Activated B cell treated with CpG ODN at 0.5 μM for 24 hours (primary cell): ENCODE measurements at regions of chr2 and their contacts with region 1.

Region 1: DNA sequence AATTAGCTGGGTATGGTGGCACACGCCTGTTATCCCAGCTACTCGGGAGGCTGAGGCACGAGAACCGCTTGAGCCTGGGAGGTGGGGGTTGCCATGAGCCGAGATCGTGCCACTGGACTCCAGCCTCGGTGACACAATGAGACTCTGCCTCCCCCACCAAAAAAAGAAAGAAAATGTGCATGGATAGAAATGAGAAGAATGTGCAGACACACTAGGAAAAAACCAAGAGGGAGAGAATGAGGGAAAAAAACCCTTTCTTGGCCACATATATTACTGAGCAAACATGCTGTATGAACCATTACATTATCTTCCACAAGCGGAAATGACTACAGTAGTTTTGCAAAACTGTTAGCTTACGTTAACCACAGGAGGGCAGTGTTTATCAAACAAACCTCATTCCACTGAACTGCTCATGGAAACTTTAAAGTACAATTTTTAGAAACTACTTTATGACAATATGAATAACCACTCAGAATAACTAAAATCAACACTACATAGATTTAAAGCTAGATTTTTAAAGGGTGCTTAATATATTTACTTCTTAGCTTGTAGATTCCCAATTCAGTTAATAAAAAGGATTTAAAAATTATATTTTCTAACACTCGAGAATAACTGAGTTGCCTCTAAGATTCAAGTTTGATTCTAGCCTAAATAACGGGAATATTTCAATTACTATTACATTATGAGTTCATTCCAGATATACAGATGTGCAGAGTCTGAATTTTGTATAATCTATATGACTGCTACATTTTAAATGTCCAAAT is 26.4 kb downstream of the ASXL2 start:
- DNase-seq: no peak
- ATAC-seq: peak; percentile 91
- H3K4me3 Mint-ChIP-seq: peak overlapping the region; percentile 58
- H3K27ac Mint-ChIP-seq: peak overlapping the region; percentile 42
- H3K4me1 Mint-ChIP-seq: peaks cover 36% of the 10 kb centered on the region
- H3K27me3 Mint-ChIP-seq: no peaks in the 10 kb centered on the region
- CTCF ChIP-seq: no peak

Region 2: GRCh38 chr2:25606892-25607291 is 245.0 kb before region 1 on chr2:
- CTCF ChIA-PET with region 1: interaction called, 25 read pairs
- POLR2A ChIA-PET with region 1: interaction called, 4 read pairs
- intact Hi-C with region 1: loop called (anchors 1 kb)
- DNase-seq: no peak
- ATAC-seq: no peak
- H3K4me3 Mint-ChIP-seq: no peak overlapping the region
- H3K27ac Mint-ChIP-seq: no peak overlapping the region
- H3K4me1 Mint-ChIP-seq: peaks cover 29% of the 10 kb centered on the region
- H3K27me3 Mint-ChIP-seq: no peaks in the 10 kb centered on the region
- CTCF ChIP-seq: no peak

Region 3: DNA sequence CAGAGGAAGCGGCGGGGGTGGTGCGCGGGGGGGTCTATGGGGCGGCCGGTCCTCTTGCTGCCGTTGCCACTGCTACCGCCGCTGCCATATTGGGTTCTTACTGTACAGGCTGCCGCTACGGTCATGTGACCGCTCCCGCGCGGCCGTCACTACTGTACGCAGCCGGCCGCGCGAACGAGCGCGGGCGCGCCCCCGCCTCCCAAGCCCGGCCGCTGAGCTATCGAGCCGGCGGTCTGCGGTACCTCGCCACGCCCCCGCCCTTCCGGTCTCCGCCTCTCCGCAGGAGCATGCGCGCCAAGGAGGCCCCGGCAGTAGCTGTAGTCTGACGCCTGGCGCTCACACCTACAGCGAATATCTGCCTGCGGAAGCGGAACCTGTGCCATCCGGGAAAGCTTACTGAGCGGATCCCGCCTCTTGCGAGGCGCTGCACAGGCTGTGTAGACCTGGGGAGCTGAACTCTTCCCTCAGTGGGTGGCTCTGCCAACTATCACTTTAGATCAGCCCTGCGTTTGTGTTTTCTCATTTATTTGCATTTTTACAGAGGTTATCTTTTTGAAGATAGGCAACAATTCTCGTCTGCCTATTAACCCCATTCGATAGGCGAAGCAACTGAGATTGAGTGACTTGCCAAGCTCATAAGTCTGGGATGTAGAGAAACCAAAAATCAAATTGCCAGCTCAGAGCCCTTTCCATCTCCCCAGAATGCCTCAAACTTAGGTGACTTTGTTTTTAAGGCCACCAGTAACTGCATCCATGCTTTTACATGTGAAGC is 26.6 kb after region 1 on chr2 and contains the start of gene ASXL2:
- CTCF ChIA-PET with region 1: interaction called, 17 read pairs
- POLR2A ChIA-PET with region 1: interaction called, 14 read pairs
- intact Hi-C with region 1: loop called (anchors 1 kb)
- DNase-seq: peak; percentile 98
- ATAC-seq: peak; percentile 88
- H3K4me3 Mint-ChIP-seq: peak within 1 kb of the TSS; percentile 98
- H3K27ac Mint-ChIP-seq: peak within 1 kb of the TSS; percentile 100
- H3K4me1 Mint-ChIP-seq: peaks cover 24% of the 10 kb centered on the region
- H3K27me3 Mint-ChIP-seq: peaks cover 2% of the 10 kb centered on the region
- CTCF ChIP-seq: no peak
- total RNA-seq, gene ASXL2: 38.4 and 41.9 TPM in 2 replicates

Region 4: GRCh38 chr2:25912851-25913695 is 61.2 kb after region 1 on chr2:
- CTCF ChIA-PET with region 1: no interaction called
- POLR2A ChIA-PET with region 1: no interaction called
- intact Hi-C with region 1: no loop called
- DNase-seq: no peak
- ATAC-seq: no peak
- H3K4me3 Mint-ChIP-seq: no peak overlapping the region
- H3K27ac Mint-ChIP-seq: no peak overlapping the region
- H3K4me1 Mint-ChIP-seq: peaks cover 7% of the 10 kb centered on the region
- H3K27me3 Mint-ChIP-seq: peaks cover 4% of the 10 kb centered on the region
- CTCF ChIP-seq: no peak

Region 5: DNA sequence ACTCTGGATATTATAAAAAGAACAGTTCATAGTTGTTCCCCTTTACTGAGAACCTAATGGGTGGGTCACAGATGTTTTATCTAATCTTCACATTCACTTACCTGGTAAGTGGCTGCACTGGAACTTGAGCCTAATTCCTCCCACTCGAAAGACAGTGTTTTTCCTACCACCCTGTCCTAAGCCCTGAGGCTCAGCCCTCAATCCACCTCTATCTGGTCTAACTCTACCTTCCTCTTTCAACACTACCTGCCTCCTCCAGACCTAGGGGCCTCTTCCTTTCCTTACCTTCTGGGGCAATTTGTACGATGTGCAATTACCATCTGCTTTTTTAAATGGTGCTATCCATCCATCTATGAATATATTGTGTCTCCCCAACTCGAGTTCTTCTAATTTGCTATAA is 140.0 kb after region 1 on chr2:
- CTCF ChIA-PET with region 1: interaction called, 8 read pairs
- POLR2A ChIA-PET with region 1: no interaction called
- intact Hi-C with region 1: loop called (anchors 1 kb)
- DNase-seq: no peak
- ATAC-seq: no peak
- H3K4me3 Mint-ChIP-seq: no peak overlapping the region
- H3K27ac Mint-ChIP-seq: no peak overlapping the region
- H3K4me1 Mint-ChIP-seq: peaks cover 6% of the 10 kb centered on the region
- H3K27me3 Mint-ChIP-seq: no peaks in the 10 kb centered on the region
- CTCF ChIP-seq: no peak

Region 6: DNA sequence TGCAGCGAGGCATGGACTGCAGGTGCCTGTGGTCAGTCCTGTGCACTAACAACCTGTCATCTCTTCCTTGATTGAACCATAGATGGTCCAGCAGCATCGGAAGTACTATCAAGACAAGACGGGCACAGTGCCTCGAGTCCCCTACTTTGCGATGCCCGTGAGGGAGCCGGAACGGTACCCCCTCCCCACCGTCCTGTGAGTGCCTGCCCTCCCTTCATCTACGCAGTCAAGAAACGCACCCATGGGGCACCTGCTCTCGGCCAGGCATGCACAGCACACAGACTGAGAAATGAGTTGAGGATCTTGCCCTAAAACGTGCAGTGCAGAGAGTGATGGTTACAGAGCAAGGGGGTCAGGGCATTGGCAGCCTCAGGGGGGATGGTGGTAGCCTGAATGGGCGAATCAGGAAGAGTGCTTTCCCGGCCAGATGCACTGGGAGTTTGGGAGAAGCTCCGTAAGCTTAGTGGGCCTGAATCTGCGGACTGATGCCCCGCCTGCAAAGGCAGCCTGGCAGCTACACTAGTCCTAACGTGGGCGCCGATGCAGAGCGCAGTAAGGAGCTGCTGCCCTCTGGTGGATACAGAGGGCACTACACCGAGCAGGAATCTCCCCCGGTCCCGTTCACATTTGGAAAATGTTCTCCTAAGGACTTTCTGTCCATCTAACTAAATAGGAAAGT is 725.7 kb after region 1 on chr2:
- CTCF ChIA-PET with region 1: no interaction called
- POLR2A ChIA-PET with region 1: no interaction called
- intact Hi-C with region 1: loop called (anchors 5 kb)
- DNase-seq: peak; percentile 49
- ATAC-seq: peak; percentile 84
- H3K4me3 Mint-ChIP-seq: no peak overlapping the region
- H3K27ac Mint-ChIP-seq: no peak overlapping the region
- H3K4me1 Mint-ChIP-seq: no peaks in the 10 kb centered on the region
- H3K27me3 Mint-ChIP-seq: peaks cover 30% of the 10 kb centered on the region
- CTCF ChIP-seq: no peak

Region 7: DNA sequence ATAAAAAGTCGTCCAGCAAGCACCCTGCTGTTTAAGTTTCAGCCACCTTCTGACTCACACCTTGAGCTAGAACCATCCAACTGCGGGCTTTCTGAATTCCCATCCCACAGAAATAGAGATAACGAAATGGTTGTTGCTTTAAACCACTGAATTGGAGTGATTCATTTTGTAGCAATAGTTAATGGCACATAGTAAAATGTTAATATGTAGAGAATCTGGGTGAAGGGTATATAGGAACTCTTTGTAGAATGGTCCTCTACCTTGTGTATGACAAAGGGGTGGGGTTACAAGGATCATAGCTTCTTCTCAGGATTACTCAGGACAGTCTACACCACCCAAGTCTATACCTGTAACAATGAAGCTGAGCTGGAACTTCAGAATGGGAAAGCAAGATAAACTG is 1116.1 kb after region 1 on chr2:
- CTCF ChIA-PET with region 1: no interaction called
- POLR2A ChIA-PET with region 1: no interaction called
- intact Hi-C with region 1: no loop called
- DNase-seq: no peak
- ATAC-seq: no peak
- H3K4me3 Mint-ChIP-seq: no peak overlapping the region
- H3K27ac Mint-ChIP-seq: no peak overlapping the region
- H3K4me1 Mint-ChIP-seq: peaks cover 21% of the 10 kb centered on the region
- H3K27me3 Mint-ChIP-seq: peaks cover 40% of the 10 kb centered on the region
- CTCF ChIP-seq: no peak